ENCODE measurements at regions of chr20 and their contacts with region 1.

Region 1: DNA sequence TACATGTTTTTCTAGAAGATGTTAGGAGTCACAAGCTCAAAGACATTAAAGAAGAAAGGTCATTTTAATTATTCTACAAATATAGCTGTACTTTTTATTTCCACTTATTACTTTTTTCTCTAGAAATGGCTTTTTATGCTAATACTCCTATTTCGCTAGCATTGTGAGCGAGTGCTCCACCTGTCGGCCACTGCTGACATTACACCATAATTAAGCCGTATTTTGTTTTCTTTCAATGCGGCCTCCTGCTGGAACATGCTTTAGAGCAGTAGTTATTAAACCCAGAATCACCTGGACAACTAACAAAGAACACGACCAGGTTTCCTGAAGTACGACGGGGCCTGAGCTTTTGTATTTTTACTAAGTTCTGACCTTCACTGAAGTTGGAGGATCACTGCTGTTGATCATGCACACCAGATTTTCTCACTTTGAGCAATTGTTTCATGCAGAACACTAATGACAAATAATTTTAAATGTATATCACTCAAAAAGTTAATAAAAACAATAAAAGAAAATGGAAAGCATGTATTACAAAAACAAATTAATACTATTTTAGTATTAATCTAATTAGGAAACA is 74.1 kb upstream of the PAK5 start:
- DNase-seq: no peak
- H3K4me3 ChIP-seq: no peak overlapping the region
- CTCF ChIP-seq: no peak
- POLR2A ChIP-seq: no peak

Region 2: GRCh38 chr20:9616833-9617489 is 296.0 kb before region 1 on chr20:
- intact Hi-C with region 1: loop called (anchors 10 kb)
- DNase-seq: peak in 1 of 2 donors; percentile 25
- H3K4me3 ChIP-seq: no peak overlapping the region
- CTCF ChIP-seq: no peak
- POLR2A ChIP-seq: no peak